Vagina (tissue), 2 donors: ENCODE measurements at regions of chr9 and their contacts with region 1.

Region 1: GRCh38 chr9:95055851-95056551 is 261.5 kb downstream of the FANCC start:
- DNase-seq: peak in 1 of 2 donors; percentile 49
- H3K4me3 ChIP-seq: peak overlapping the region; percentile 30 to 32
- H3K27ac ChIP-seq: peak overlapping the region; percentile 95
- H3K4me1 ChIP-seq: peaks cover 85% of the 10 kb centered on the region
- H3K27me3 ChIP-seq: no peaks in the 10 kb centered on the region
- CTCF ChIP-seq: no peak
- POLR2A ChIP-seq: no peak

Region 2: DNA sequence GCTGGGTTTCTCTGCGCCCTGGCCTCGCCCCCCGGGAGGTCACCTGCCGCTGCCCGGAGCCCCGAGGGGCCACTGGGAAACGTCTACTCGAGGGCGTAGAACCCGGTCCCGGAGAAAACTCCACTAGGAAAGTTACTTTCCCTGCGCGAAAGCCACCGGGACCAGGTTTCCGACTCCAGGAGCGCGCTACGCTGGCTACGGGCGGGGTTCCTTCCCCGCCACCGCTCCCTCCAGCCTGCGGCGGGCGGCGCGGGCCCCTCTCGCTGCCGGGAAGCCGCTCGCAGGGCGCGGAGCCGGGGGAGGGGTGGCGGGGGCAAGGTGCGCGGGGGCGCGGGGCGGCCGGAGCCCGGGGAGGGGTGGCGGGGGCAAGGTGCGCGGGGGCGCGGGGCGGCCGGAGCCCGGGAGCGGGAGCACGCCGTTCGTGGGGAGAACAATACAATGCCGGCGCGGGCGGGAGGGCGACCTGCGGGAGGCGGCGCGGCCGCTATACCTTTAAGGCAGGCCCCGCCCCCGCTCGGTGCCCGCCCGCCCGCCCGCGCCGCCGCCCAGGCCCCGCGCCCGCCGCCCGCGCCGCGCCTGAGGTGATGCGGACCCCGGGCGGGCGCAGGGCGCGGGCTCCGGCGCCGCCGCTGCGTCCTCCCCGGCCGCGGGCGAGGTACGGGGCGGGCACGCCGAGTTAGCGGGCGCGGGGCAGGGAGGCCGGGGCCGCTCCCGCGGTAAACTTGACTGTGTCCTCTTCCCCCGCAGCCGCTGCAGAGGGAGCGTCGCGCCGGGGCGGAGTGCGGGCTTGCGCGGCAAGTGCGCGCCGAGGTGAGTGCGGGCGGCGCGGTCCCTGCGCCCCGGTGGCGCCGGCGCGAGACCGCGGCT is 51.4 kb before region 1 on chr9:
- intact Hi-C with region 1: loop called (anchors 10 kb)
- DNase-seq: no peak
- H3K4me3 ChIP-seq: peak overlapping the region; percentile 90 to 92
- H3K27ac ChIP-seq: peak overlapping the region; percentile 100
- H3K4me1 ChIP-seq: peaks cover 47% of the 10 kb centered on the region
- H3K27me3 ChIP-seq: no peaks in the 10 kb centered on the region
- CTCF ChIP-seq: peak in 1 of 3 experiments; percentile 1
- POLR2A ChIP-seq: no peak

Region 3: DNA sequence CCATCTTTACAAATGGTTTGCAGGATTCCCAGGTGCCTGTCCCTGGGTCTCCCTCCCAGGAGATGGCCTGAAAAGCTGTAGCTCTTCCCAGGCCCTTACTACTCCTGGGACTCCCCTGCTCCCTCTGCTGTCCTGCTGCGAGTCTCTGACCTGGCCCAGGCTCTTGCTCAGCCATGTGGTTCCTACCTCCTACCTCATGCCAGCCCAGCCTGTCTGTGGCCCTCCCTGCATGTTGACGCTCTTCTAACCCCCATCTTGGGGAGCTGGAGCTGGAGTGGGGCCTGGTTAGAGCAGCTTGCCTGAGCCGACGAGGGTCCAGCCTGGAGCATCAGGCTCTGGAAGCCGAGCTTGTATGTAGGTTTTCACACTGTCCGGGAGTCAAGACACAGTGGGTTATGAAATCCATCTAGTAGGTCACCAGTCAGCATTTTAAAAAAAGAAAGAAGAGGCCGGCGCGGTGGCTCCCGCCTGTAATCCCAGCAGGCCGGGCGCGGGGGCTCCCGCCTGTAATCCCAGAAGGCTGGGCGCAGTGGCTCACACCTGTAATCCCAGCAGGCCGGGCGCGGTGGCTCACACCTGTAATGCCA is 17.1 kb after region 1 on chr9:
- intact Hi-C with region 1: loop called (anchors 2 kb)
- DNase-seq: peak in 1 of 2 donors; percentile 84
- H3K4me3 ChIP-seq: no peak overlapping the region
- H3K27ac ChIP-seq: peak overlapping the region; percentile 1
- H3K4me1 ChIP-seq: peaks cover 98% of the 10 kb centered on the region
- H3K27me3 ChIP-seq: no peaks in the 10 kb centered on the region
- CTCF ChIP-seq: no peak
- POLR2A ChIP-seq: no peak